ENCODE measurements at regions of chr19 and their contacts with region 1.

Region 1: GRCh38 chr19:1275260-1275975 is at the start of gene FAM174C:
- DNase-seq: peak; percentile 96
- H3K4me3 ChIP-seq: peak within 1 kb of the TSS; percentile 72 to 80 (median 75)
- H3K27ac ChIP-seq: peak within 1 kb of the TSS; percentile 72
- H3K4me1 ChIP-seq: peaks cover 35% of the 10 kb centered on the region
- H3K27me3 ChIP-seq: no peaks in the 10 kb centered on the region
- CTCF ChIP-seq: no peak
- total RNA-seq, gene FAM174C: 22.8 to 60.1 TPM

Region 2: GRCh38 chr19:1315470-1316231 is 40.2 kb after region 1 on chr19:
- CTCF ChIA-PET with region 1: no interaction called
- dilution Hi-C with region 1: loop called (anchors 5 kb)
- in situ Hi-C with region 1: no loop called
- intact Hi-C with region 1: loop called (anchors 5 kb)
- DNase-seq: peak; percentile 39
- H3K4me3 ChIP-seq: peak overlapping the region in 1 of 3 experiments; percentile 13
- H3K27ac ChIP-seq: no peak overlapping the region
- H3K4me1 ChIP-seq: peaks cover 22% of the 10 kb centered on the region
- H3K27me3 ChIP-seq: peaks cover 9% of the 10 kb centered on the region
- CTCF ChIP-seq: peak; percentile 34 to 74

Region 3: GRCh38 chr19:1360818-1361461 is 85.5 kb after region 1 on chr19:
- CTCF ChIA-PET with region 1: no interaction called
- dilution Hi-C with region 1: no loop called
- in situ Hi-C with region 1: no loop called
- intact Hi-C with region 1: loop called (anchors 5 kb)
- DNase-seq: peak; percentile 26
- H3K4me3 ChIP-seq: peak overlapping the region; percentile 7 to 16 (median 12)
- H3K27ac ChIP-seq: no peak overlapping the region
- H3K4me1 ChIP-seq: peaks cover 19% of the 10 kb centered on the region
- H3K27me3 ChIP-seq: no peaks in the 10 kb centered on the region
- CTCF ChIP-seq: no peak

Region 4: GRCh38 chr19:1406774-1407499 is 131.5 kb after region 1 on chr19:
- CTCF ChIA-PET with region 1: no interaction called
- dilution Hi-C with region 1: loop called (anchors 5 kb)
- in situ Hi-C with region 1: no loop called
- intact Hi-C with region 1: loop called (anchors 5 kb)
- DNase-seq: peak; percentile 98
- H3K4me3 ChIP-seq: peak overlapping the region; percentile 56 to 71 (median 65)
- H3K27ac ChIP-seq: peak overlapping the region; percentile 25
- H3K4me1 ChIP-seq: peaks cover 50% of the 10 kb centered on the region
- H3K27me3 ChIP-seq: no peaks in the 10 kb centered on the region
- CTCF ChIP-seq: peak; percentile 37 to 63

Region 5: GRCh38 chr19:1445185-1445931 is 169.9 kb after region 1 on chr19:
- CTCF ChIA-PET with region 1: interaction called, 3 read pairs
- dilution Hi-C with region 1: loop called (anchors 5 kb)
- in situ Hi-C with region 1: no loop called
- intact Hi-C with region 1: no loop called
- DNase-seq: peak; percentile 49
- H3K4me3 ChIP-seq: peak overlapping the region in 1 of 3 experiments; percentile 6
- H3K27ac ChIP-seq: no peak overlapping the region
- H3K4me1 ChIP-seq: peaks cover 31% of the 10 kb centered on the region
- H3K27me3 ChIP-seq: peaks cover 23% of the 10 kb centered on the region
- CTCF ChIP-seq: peak; percentile 58 to 69

Region 6: DNA sequence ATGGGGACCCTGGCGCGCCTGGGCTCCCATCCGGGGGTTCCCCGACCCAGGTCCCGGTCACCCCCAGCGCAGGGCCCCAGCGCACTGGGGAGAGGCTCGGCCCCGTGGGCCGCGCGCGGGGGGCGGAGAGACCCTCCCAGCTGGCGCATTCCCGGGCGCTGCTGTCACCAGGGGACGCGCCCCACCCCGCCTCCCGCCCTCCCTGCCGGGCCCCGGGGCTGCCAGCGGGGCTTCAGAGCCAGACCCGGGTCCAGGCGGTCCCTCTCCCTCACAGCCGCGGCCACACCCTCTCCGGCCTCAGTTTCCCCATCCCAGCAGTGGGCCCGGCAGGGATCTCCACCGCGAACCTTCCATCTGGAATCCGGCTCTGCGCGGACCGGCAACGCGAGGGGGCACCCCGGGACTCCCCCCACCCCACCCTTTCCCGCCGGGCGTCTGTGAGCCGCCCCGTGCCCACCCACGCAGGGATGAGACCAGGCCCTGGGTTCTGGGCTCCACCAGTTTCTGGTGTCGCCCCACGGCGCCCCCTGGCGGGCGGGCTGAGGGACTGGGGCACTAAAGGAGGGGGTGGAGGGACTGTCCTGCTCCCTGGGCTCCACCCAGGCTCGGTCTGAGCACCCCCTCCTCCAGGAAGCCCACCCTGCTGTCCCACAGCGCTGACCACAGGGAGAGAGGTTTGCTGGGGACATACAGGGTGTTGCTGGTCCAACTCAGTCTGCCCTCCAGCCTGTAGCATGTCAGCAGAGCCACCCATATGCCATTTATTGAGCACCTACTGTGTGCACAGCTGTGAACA is 238.3 kb after region 1 on chr19:
- CTCF ChIA-PET with region 1: no interaction called
- dilution Hi-C with region 1: no loop called
- in situ Hi-C with region 1: no loop called
- intact Hi-C with region 1: loop called (anchors 1 kb)
- DNase-seq: peak; percentile 42
- H3K4me3 ChIP-seq: peak overlapping the region; percentile 52 to 77 (median 66)
- H3K27ac ChIP-seq: peak overlapping the region; percentile 10
- H3K4me1 ChIP-seq: peaks cover 9% of the 10 kb centered on the region
- H3K27me3 ChIP-seq: no peaks in the 10 kb centered on the region
- CTCF ChIP-seq: peak; percentile 56 to 92

Measured in mammary epithelial cell (primary cell).